Naive thymus-derived CD4-positive, alpha-beta T cell (primary cell): ENCODE measurements at regions of chr20 and their contacts with region 1.

Region 1: GRCh38 chr20:33719989-33720709 is at the start of gene PXMP4:
- DNase-seq: peak; percentile 60 to 97 (median 94)
- ATAC-seq: peak; percentile 98
- H3K4me3 ChIP-seq: peak within 1 kb of the TSS; percentile 87
- H3K4me3 Mint-ChIP-seq: peak within 1 kb of the TSS; percentile 81 to 95 (median 90)
- H3K27ac ChIP-seq: peak within 1 kb of the TSS; percentile 74
- H3K27ac Mint-ChIP-seq: peak within 1 kb of the TSS; percentile 81 to 97 (median 87)
- H3K4me1 ChIP-seq: peaks cover 0 to 22% of the 10 kb centered on the region in 2 donors
- H3K4me1 Mint-ChIP-seq: peaks cover 22 to 36% (median 27%) of the 10 kb centered on the region in 7 donors
- H3K27me3 ChIP-seq: no peaks in the 10 kb centered on the region
- H3K27me3 Mint-ChIP-seq: no peaks in the 10 kb centered on the region
- total RNA-seq, gene PXMP4: 4.5 to 14.3 (median 10.1) TPM

Region 2: GRCh38 chr20:33489495-33490022 is 230.6 kb before region 1 on chr20:
- CTCF ChIA-PET with region 1: interaction called, 3 read pairs
- POLR2A ChIA-PET with region 1: interaction called, 7 read pairs
- intact Hi-C with region 1: loop called in 1 of 2 experiments (anchors 1 kb)
- DNase-seq: peak; percentile 97 to 99 (median 99)
- ATAC-seq: peak; percentile 97
- H3K4me3 ChIP-seq: peak overlapping the region; percentile 75
- H3K4me3 Mint-ChIP-seq: peak overlapping the region; percentile 84 to 95 (median 88)
- H3K27ac ChIP-seq: peak overlapping the region; percentile 94
- H3K27ac Mint-ChIP-seq: peak overlapping the region; percentile 86 to 96 (median 90)
- H3K4me1 ChIP-seq: peaks cover 4 to 9% of the 10 kb centered on the region in 2 donors
- H3K4me1 Mint-ChIP-seq: peaks cover 0 to 30% (median 13%) of the 10 kb centered on the region in 7 donors
- H3K27me3 ChIP-seq: no peaks in the 10 kb centered on the region
- H3K27me3 Mint-ChIP-seq: no peaks in the 10 kb centered on the region

Region 3: DNA sequence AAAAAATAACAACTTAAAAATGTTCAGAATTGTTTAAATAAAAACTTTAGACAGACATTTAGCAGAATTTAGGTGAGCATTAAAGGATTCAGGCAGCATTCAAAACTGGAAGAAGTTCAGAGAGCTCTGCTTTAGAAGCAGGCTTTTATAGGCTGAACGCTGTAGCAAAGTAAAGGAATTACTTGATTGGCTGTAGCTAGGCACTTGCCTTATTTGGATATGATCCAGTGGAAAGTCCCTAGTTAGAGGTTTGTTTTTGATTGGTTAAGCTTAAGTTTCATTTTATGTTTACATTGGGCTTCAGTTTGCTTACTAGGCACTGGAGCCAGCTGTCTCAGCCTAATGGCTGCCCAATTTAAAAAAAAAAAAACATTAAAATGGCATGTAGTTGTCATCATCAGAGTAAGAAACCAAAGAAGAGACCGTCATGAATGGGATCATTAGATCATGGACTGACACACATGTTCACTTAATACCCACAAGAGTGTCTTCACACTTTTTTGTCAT is 165.2 kb before region 1 on chr20:
- CTCF ChIA-PET with region 1: no interaction called
- POLR2A ChIA-PET with region 1: interaction called, 3 read pairs
- intact Hi-C with region 1: loop called in 1 of 2 experiments (anchors 1 kb)
- DNase-seq: peak in 7 of 9 donors; percentile 72 to 92 (median 88)
- ATAC-seq: peak; percentile 98
- H3K4me3 ChIP-seq: peak overlapping the region; percentile 3
- H3K4me3 Mint-ChIP-seq: peak overlapping the region; percentile 51 to 83 (median 75)
- H3K27ac ChIP-seq: peak overlapping the region; percentile 81
- H3K27ac Mint-ChIP-seq: peak overlapping the region; percentile 90 to 98 (median 95)
- H3K4me1 ChIP-seq: peaks cover 16% of the 10 kb centered on the region in 2 donors
- H3K4me1 Mint-ChIP-seq: peaks cover 15 to 49% (median 39%) of the 10 kb centered on the region in 7 donors
- H3K27me3 ChIP-seq: no peaks in the 10 kb centered on the region
- H3K27me3 Mint-ChIP-seq: no peaks in the 10 kb centered on the region

Region 4: DNA sequence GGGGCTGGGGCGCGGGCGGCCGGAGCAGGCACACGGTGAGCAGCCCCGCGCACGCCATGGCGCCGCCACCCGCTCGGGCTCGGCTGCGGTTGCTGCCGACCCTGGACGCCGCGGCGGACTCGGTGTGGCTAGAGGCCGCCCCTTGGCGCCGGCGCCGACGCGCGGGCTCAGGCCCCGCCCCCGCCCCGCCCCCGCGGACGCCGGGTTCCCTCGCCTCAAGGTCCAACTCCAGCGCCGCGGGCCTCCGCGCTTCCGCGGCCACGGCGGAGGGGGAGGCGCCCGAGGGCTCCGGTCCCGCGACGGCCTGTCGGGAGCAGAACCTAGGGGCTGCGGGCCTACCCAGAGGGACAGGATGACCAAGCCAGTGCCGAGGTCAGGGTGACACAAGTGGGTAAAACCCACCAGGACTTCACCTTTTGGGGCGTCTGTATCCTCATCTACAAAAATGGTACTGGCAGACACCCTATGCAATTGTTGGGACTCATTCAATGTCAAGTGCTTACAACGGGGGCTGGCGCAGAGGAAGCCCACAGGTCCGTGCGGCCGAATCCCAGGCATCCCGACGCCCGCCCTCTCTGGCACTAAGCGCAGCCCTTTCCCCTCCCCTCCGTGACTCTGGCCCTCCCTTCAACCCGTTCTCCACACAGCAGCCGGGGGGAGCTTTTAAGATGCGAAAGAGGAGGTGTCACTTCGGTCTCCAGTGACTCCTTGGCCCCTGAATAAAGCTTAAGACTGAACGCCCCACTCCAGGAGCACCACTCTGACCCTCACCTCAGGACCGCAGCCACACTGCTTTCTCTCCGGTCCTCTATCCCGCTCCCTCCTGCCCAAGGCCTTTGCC is 45.6 kb before region 1 on chr20 and contains the start of gene NECAB3:
- CTCF ChIA-PET with region 1: interaction called, 4 read pairs
- POLR2A ChIA-PET with region 1: interaction called, 22 read pairs
- intact Hi-C with region 1: loop called in 1 of 2 experiments (anchors 1 kb)
- DNase-seq: peak in 6 of 9 donors; percentile 27 to 83 (median 39)
- ATAC-seq: peak; percentile 89
- H3K4me3 ChIP-seq: peak within 1 kb of the TSS; percentile 58
- H3K4me3 Mint-ChIP-seq: peak within 1 kb of the TSS; percentile 85 to 95 (median 87)
- H3K27ac ChIP-seq: peak within 1 kb of the TSS; percentile 54
- H3K27ac Mint-ChIP-seq: peak within 1 kb of the TSS; percentile 33 to 90 (median 80)
- H3K4me1 ChIP-seq: peaks cover 15 to 38% of the 10 kb centered on the region in 2 donors
- H3K4me1 Mint-ChIP-seq: peaks cover 30 to 69% (median 47%) of the 10 kb centered on the region in 7 donors
- H3K27me3 ChIP-seq: no peaks in the 10 kb centered on the region
- H3K27me3 Mint-ChIP-seq: no peaks in the 10 kb centered on the region
- total RNA-seq, gene NECAB3: 10.8 to 46.8 (median 16.3) TPM

Region 5: GRCh38 chr20:33679758-33680485 is 40.2 kb before region 1 on chr20:
- CTCF ChIA-PET with region 1: interaction called, 4 read pairs
- POLR2A ChIA-PET with region 1: interaction called, 22 read pairs
- intact Hi-C with region 1: no loop called
- DNase-seq: no peak
- ATAC-seq: peak; percentile 59
- H3K4me3 ChIP-seq: no peak overlapping the region
- H3K4me3 Mint-ChIP-seq: peak overlapping the region in 9 of 10 donors; percentile 29 to 87 (median 72)
- H3K27ac ChIP-seq: no peak overlapping the region
- H3K27ac Mint-ChIP-seq: peak overlapping the region in 8 of 9 donors; percentile 28 to 92 (median 81)
- H3K4me1 ChIP-seq: peaks cover 13 to 33% of the 10 kb centered on the region in 2 donors
- H3K4me1 Mint-ChIP-seq: peaks cover 29 to 85% (median 44%) of the 10 kb centered on the region in 7 donors
- H3K27me3 ChIP-seq: no peaks in the 10 kb centered on the region
- H3K27me3 Mint-ChIP-seq: no peaks in the 10 kb centered on the region

Region 6: DNA sequence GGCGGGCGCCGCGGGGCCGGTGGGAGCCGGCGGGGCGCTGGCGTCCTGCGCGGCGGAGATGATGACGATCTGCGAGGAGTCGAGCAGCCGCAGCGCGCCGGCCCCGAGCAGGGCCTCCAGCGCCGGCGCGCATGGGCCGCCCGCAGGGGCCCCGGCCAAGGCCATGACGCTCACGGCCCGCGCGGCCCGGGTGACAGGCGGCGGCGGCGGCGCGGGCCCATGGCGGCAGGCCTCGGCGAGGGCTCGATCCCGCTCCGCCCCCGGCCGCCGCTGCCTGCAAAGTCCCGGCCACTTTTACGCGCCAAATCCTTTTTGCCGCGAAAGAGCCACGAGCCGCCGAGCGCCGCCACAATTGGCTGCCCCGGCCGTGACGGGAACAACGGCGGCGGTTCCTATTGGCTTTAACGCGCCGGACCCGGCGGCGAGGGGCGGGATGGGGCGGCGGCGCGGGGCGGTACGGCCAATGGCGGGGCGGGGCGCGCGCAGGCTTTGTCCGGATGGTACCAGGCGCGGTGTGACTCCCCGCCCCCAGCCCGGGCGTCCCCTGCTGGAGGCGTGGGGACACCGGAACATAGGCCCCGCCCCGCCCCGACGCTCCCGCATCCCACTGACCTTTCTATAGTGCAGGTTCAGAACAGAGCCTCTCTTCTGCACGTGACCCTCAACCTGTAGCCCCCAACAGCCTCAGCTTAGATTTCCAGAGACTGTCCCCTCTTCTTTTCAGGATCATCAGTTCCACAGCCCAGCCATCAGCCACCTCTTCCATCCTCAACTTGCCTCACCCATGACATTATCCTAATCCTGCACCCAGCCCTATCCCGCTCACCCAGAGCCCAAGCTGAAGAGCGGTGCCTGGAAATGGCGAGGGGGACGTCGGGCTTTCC is 33.8 kb before region 1 on chr20 and contains the start of gene E2F1:
- CTCF ChIA-PET with region 1: interaction called, 3 read pairs
- POLR2A ChIA-PET with region 1: interaction called, 10 read pairs
- intact Hi-C with region 1: loop called (anchors 1 kb)
- DNase-seq: peak; percentile 85 to 98 (median 90)
- ATAC-seq: peak; percentile 98
- H3K4me3 ChIP-seq: peak within 1 kb of the TSS; percentile 55
- H3K4me3 Mint-ChIP-seq: peak within 1 kb of the TSS; percentile 74 to 95 (median 84)
- H3K27ac ChIP-seq: peak within 1 kb of the TSS; percentile 59
- H3K27ac Mint-ChIP-seq: peak within 1 kb of the TSS; percentile 6 to 95 (median 84)
- H3K4me1 ChIP-seq: peaks cover 3 to 27% of the 10 kb centered on the region in 2 donors
- H3K4me1 Mint-ChIP-seq: peaks cover 11 to 72% (median 38%) of the 10 kb centered on the region in 7 donors
- H3K27me3 ChIP-seq: no peaks in the 10 kb centered on the region
- H3K27me3 Mint-ChIP-seq: no peaks in the 10 kb centered on the region
- total RNA-seq, gene E2F1: 0.98 to 61.6 (median 1.6) TPM

Region 7: GRCh38 chr20:33933469-33933909 is 213.3 kb after region 1 on chr20:
- CTCF ChIA-PET with region 1: no interaction called
- POLR2A ChIA-PET with region 1: no interaction called
- intact Hi-C with region 1: no loop called
- DNase-seq: peak; percentile 14 to 62 (median 48)
- ATAC-seq: peak; percentile 71
- H3K4me3 ChIP-seq: no peak overlapping the region
- H3K4me3 Mint-ChIP-seq: no peak overlapping the region
- H3K27ac ChIP-seq: peak overlapping the region; percentile 13
- H3K27ac Mint-ChIP-seq: peak overlapping the region in 1 of 9 donors; percentile 27
- H3K4me1 ChIP-seq: no peaks in the 10 kb centered on the region
- H3K4me1 Mint-ChIP-seq: peaks cover 0 to 2% (median 0%) of the 10 kb centered on the region in 7 donors
- H3K27me3 ChIP-seq: no peaks in the 10 kb centered on the region
- H3K27me3 Mint-ChIP-seq: peaks cover 0 to 3% (median 0%) of the 10 kb centered on the region in 5 donors

Region 8: DNA sequence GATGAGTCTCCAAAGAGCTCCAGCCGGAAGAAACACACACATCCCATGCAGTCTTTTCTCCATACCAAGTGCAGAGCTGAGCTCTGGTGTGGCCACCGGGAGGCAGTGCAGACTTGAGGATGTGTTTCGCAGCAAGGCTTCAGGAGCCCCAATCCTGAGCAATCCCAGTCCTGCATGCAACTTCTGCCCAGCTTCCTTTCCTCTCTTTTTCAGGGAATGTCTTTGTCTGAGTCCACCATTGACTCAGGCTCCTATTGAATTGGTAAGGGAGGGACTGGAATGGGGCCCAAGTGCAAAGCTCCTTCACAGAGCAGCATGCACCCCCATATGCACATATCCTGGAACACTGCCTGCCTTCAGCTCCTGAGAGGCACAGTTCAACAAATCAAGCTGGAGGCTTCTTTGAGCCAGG is 470.5 kb after region 1 on chr20:
- CTCF ChIA-PET with region 1: no interaction called
- POLR2A ChIA-PET with region 1: no interaction called
- intact Hi-C with region 1: no loop called
- DNase-seq: peak in 6 of 9 donors; percentile 12 to 38 (median 28)
- ATAC-seq: peak; percentile 60
- H3K4me3 ChIP-seq: no peak overlapping the region
- H3K4me3 Mint-ChIP-seq: no peak overlapping the region
- H3K27ac ChIP-seq: no peak overlapping the region
- H3K27ac Mint-ChIP-seq: no peak overlapping the region
- H3K4me1 ChIP-seq: no peaks in the 10 kb centered on the region
- H3K4me1 Mint-ChIP-seq: peaks cover 0 to 12% (median 0%) of the 10 kb centered on the region in 7 donors
- H3K27me3 ChIP-seq: no peaks in the 10 kb centered on the region
- H3K27me3 Mint-ChIP-seq: peaks cover 0 to 50% (median 6%) of the 10 kb centered on the region in 5 donors